OCI-LY7 (cell line): ENCODE measurements at regions of chr4 and their contacts with region 1.

Region 1: GRCh38 chr4:128191115-128191781 is 96.4 kb downstream of the PGRMC2 start:
- DNase-seq: peak; percentile 77
- H3K4me3 ChIP-seq: no peak overlapping the region
- H3K27ac ChIP-seq: no peak overlapping the region
- H3K4me1 ChIP-seq: no peaks in the 10 kb centered on the region
- CTCF ChIP-seq: peak; percentile 99

Region 2: GRCh38 chr4:127555106-127555505 is 636.1 kb before region 1 on chr4:
- CTCF ChIA-PET with region 1: no interaction called
- POLR2A ChIA-PET with region 1: no interaction called
- intact Hi-C with region 1: no loop called
- DNase-seq: no peak
- H3K4me3 ChIP-seq: no peak overlapping the region
- H3K27ac ChIP-seq: no peak overlapping the region
- H3K4me1 ChIP-seq: no peaks in the 10 kb centered on the region
- CTCF ChIP-seq: no peak

Region 3: GRCh38 chr4:127880764-127881562 is 310.3 kb before region 1 on chr4 and contains the start of gene PLK4:
- CTCF ChIA-PET with region 1: no interaction called
- POLR2A ChIA-PET with region 1: no interaction called
- intact Hi-C with region 1: no loop called
- DNase-seq: peak; percentile 97
- H3K4me3 ChIP-seq: peak within 1 kb of the TSS; percentile 72
- H3K27ac ChIP-seq: peak within 1 kb of the TSS; percentile 67
- H3K4me1 ChIP-seq: peaks cover 29% of the 10 kb centered on the region
- CTCF ChIP-seq: no peak
- total RNA-seq, gene PLK4: 74.1 and 79.3 TPM in 2 replicates

Region 4: GRCh38 chr4:128141866-128142265 is 49.4 kb before region 1 on chr4:
- CTCF ChIA-PET with region 1: no interaction called
- POLR2A ChIA-PET with region 1: no interaction called
- intact Hi-C with region 1: no loop called
- DNase-seq: no peak
- H3K4me3 ChIP-seq: no peak overlapping the region
- H3K27ac ChIP-seq: no peak overlapping the region
- H3K4me1 ChIP-seq: no peaks in the 10 kb centered on the region
- CTCF ChIP-seq: no peak

Region 5: GRCh38 chr4:128220286-128221235 is 29.3 kb after region 1 on chr4:
- CTCF ChIA-PET with region 1: no interaction called
- POLR2A ChIA-PET with region 1: no interaction called
- intact Hi-C with region 1: loop called (anchors 2 kb)
- DNase-seq: peak; percentile 20
- H3K4me3 ChIP-seq: no peak overlapping the region
- H3K27ac ChIP-seq: no peak overlapping the region
- H3K4me1 ChIP-seq: no peaks in the 10 kb centered on the region
- CTCF ChIP-seq: peak; percentile 73

Region 6: DNA sequence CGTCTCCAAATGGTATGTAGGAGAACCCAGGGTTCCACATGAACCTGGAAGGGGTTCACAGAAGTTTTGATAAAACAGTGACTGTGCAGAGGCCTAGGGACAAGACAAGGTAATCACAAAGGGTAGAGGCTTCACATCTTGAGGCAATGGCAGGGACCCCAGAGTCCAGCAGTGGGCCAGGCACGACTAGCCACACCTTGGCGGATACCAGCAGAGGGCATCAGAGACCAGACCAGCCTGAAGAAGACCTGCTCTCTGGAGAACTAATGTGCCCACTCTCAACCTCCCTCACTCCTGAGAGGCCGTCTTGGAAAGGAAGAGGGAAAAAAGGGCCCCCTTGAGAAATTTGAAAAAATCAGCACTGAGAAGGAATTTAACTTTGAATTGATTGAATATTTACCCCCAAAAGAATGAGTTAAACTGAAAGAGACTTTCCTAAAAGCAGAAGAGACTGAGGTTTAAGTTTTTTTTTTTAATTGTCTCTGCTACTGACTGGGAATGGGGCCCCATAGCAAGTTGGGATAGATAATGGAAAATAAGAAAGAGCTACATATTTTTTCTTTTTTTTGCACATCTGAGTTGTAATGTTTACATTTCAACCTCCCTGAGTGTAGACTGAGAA is 374.4 kb after region 1 on chr4:
- CTCF ChIA-PET with region 1: no interaction called
- POLR2A ChIA-PET with region 1: no interaction called
- intact Hi-C with region 1: loop called (anchors 10 kb)
- DNase-seq: peak; percentile 33
- H3K4me3 ChIP-seq: no peak overlapping the region
- H3K27ac ChIP-seq: no peak overlapping the region
- H3K4me1 ChIP-seq: no peaks in the 10 kb centered on the region
- CTCF ChIP-seq: peak; percentile 64